ENCODE measurements at regions of chr17 and their contacts with region 1.

Region 1: GRCh38 chr17:76353599-76354316 is at the start of gene PRPSAP1:
- DNase-seq: peak; percentile 87 to 96 (median 89)
- ATAC-seq: peak; percentile 94
- H3K4me3 ChIP-seq: peak within 1 kb of the TSS; percentile 89
- H3K27ac ChIP-seq: peak within 1 kb of the TSS; percentile 100
- H3K4me1 ChIP-seq: peaks cover 18 to 39% of the 10 kb centered on the region in 2 experiments; a peak in 4 of 5 replicates
- H3K27me3 ChIP-seq: no peaks in the 10 kb centered on the region
- CTCF ChIP-seq: 0 out of 6 replicates have a peak, but pooled peaks of 1 of the 3 experiments have one; percentile 6
- EP300 ChIP-seq: no peak
- POLR2A ChIP-seq: peak; percentile 87
- RAD21 ChIP-seq: no peak
- polyA plus RNA-seq, gene PRPSAP1: 21.9 to 31.9 TPM

Region 2: DNA sequence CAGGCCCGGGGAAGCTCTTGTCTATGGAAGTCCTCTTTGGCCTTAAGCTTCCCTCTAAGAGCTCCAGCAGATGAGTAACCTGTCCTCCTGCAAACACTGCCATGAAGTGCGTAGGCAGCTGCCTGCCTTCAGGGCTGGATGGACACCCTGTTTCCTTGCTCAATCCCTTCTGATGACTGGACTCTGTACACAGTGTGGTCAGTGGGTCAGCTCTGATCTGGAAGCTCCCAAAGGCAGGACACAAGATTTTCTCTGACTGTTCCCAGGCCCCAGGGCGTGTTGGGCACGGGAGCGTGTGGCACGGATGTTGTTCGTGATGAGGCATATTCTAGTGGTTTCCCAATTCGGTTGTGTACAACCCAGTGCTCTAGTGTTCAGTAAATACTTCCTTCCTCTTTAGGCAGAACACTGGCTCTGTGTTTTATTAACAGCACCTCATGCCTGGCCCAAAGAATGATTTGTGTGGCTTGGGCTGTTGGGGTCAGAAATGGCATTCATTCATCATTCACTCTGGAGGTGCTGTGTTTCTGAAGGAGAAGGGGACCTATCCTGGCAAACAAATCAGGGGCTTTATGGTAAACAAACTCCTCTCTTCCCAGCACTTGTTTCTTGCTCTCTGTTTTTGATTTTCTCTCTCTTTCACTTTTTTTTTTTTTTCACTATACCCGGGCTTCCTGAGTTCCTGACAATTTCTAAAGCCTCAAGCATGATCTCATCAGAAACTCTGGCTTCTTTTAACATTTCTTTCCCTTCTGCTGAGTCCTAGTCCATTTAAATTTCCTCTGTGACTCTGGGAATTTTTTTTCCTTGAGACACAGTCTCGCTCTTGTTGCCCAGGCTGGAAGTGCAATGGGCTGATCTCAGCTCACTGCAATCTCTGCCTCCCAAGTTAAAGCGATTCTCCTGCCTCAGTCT is 101.5 kb before region 1 on chr17:
- CTCF ChIA-PET with region 1: no interaction called
- POLR2A ChIA-PET with region 1: no interaction called
- in situ Hi-C with region 1: no loop called
- intact Hi-C with region 1: no loop called
- DNase-seq: no peak
- ATAC-seq: peak; percentile 16; the same call in 2 of the 3 replicates
- H3K4me3 ChIP-seq: no peak overlapping the region
- H3K27ac ChIP-seq: no peak overlapping the region
- H3K4me1 ChIP-seq: peaks cover 3 to 4% of the 10 kb centered on the region in 2 experiments; a peak in 4 of 5 replicates
- H3K27me3 ChIP-seq: no peaks in the 10 kb centered on the region
- CTCF ChIP-seq: no peak
- EP300 ChIP-seq: no peak
- POLR2A ChIP-seq: no peak
- RAD21 ChIP-seq: no peak

Region 3: DNA sequence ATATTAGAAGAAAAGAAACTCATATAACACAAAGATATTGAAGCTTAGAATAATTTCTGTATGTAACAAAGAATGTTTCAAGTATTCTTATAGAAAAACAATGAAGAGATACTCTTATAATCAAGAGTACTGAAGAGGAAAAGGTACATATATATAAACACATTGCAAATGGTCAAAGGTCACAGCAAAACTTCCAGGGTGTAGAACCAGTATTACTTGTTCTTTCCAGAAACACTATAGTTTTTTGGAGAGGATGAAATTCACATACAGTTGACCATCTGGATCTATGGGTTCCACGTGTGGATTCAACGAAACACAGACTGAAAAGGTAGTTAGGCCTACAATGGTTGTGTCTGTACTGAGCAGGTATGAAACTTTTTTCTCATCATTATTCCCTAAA is 22.7 kb before region 1 on chr17:
- CTCF ChIA-PET with region 1: no interaction called
- POLR2A ChIA-PET with region 1: interaction called, 10 read pairs
- in situ Hi-C with region 1: no loop called
- intact Hi-C with region 1: no loop called
- DNase-seq: no peak
- ATAC-seq: no peak
- H3K4me3 ChIP-seq: no peak overlapping the region
- H3K27ac ChIP-seq: no peak overlapping the region
- H3K4me1 ChIP-seq: no peaks in the 10 kb centered on the region; a peak in 2 of 5 replicates
- H3K27me3 ChIP-seq: no peaks in the 10 kb centered on the region
- CTCF ChIP-seq: no peak
- EP300 ChIP-seq: no peak
- POLR2A ChIP-seq: no peak
- RAD21 ChIP-seq: no peak

Region 4: DNA sequence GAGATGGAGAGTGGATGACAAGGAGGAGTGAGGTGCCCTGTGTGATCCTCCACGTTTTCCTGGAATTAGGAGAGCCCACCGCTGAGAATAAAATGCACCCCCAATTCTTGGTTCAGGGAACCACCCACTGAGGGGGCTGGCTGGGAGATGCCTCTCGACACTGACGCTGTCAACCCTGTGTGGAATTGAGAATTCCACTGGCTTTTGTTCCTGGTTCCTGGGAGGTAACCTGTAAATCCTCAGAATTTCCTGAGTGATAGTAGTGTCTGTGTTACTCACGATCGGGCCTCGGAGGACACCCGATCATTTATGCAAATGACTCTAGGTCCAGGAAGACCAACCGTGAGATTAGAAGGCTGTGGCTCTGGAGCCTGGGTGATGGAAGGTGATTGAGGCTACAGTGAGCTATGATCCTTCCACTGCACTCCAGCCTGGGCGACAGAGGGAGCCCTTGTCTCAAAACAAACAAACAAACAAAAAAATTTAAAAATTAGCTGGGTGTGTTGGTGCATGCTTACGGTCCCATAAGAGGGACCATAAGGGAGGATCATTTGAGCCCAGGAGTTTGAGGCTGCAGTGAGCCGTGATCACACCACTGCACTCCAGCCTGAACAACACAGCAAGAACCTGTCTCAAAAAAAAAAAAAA is 11.6 kb after region 1 on chr17:
- CTCF ChIA-PET with region 1: no interaction called
- POLR2A ChIA-PET with region 1: interaction called, 17 read pairs
- in situ Hi-C with region 1: no loop called
- intact Hi-C with region 1: no loop called
- DNase-seq: peak in 3 of 4 experiments; percentile 5 to 58 (median 25)
- ATAC-seq: peak; percentile 75
- H3K4me3 ChIP-seq: no peak overlapping the region
- H3K27ac ChIP-seq: no peak overlapping the region
- H3K4me1 ChIP-seq: peaks cover 4 to 28% of the 10 kb centered on the region in 2 experiments; a peak in 4 of 5 replicates
- H3K27me3 ChIP-seq: no peaks in the 10 kb centered on the region
- CTCF ChIP-seq: peak; percentile 52 to 70 (median 54)
- EP300 ChIP-seq: no peak
- POLR2A ChIP-seq: no peak
- RAD21 ChIP-seq: peak; percentile 27 to 36; a peak in 3 of 4 replicates

Region 5: GRCh38 chr17:76370261-76370993 is 16.7 kb after region 1 on chr17:
- CTCF ChIA-PET with region 1: no interaction called
- POLR2A ChIA-PET with region 1: interaction called, 10 read pairs
- in situ Hi-C with region 1: no loop called
- intact Hi-C with region 1: no loop called
- DNase-seq: peak; percentile 56 to 67 (median 58)
- ATAC-seq: peak; percentile 83
- H3K4me3 ChIP-seq: no peak overlapping the region
- H3K27ac ChIP-seq: no peak overlapping the region; the same call in 2 of the 3 replicates
- H3K4me1 ChIP-seq: peaks cover 4 to 20% of the 10 kb centered on the region in 2 experiments; a peak in 4 of 5 replicates
- H3K27me3 ChIP-seq: no peaks in the 10 kb centered on the region
- CTCF ChIP-seq: peak; percentile 75 to 92 (median 85)
- EP300 ChIP-seq: no peak
- POLR2A ChIP-seq: no peak
- RAD21 ChIP-seq: peak; percentile 20 to 45; a peak in 3 of 4 replicates

Region 6: GRCh38 chr17:76384222-76384986 is 30.6 kb after region 1 on chr17 and contains the start of gene SPHK1:
- CTCF ChIA-PET with region 1: no interaction called
- POLR2A ChIA-PET with region 1: interaction called, 15 read pairs
- in situ Hi-C with region 1: no loop called
- intact Hi-C with region 1: loop called (anchors 2 kb)
- DNase-seq: peak; percentile 87 to 92 (median 90)
- ATAC-seq: peak; percentile 80
- H3K4me3 ChIP-seq: peak within 1 kb of the TSS; percentile 74
- H3K27ac ChIP-seq: peak within 1 kb of the TSS; percentile 93
- H3K4me1 ChIP-seq: peaks cover 14 to 66% of the 10 kb centered on the region in 2 experiments
- H3K27me3 ChIP-seq: no peaks in the 10 kb centered on the region
- CTCF ChIP-seq: no peak
- EP300 ChIP-seq: no peak
- POLR2A ChIP-seq: peak; percentile 80
- RAD21 ChIP-seq: no peak
- polyA plus RNA-seq, gene SPHK1: 0.21 to 1.9 TPM